Naive thymus-derived CD4-positive, alpha-beta T cell (primary cell): ENCODE measurements at regions of chr19 and their contacts with region 1.

Region 1: DNA sequence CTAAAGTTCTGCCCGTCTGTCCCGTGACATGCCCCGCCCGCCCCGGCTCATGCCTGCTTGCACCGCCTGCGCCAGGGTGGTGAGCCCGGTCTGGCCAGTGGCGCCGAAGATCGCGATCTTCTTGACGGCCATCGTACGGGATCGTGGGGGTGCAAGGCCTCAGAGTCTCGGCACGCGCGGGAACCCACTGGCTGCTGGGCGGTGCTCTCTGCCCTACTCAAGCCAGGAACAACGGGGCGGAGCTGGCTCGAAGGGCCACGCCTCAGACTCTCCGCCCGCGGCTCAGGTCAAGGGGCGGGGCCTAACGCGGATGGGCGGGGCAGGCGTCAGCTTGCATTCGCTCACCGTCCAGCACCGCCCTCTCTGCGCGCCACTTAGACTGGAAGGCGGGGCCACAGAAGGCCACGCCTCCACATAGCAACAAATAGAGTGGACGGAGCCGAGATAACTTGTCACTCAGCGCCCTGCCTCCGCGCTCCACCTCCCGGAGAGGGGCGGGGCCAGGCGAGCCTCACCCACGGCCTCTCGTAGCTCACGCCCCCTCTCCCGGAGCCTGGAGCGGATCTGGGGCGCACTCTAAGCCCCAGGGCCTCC is at the start of gene BLVRB:
- DNase-seq: peak; percentile 98 to 100 (median 99)
- ATAC-seq: peak; percentile 90
- H3K4me3 ChIP-seq: peak within 1 kb of the TSS; percentile 44
- H3K4me3 Mint-ChIP-seq: peak within 1 kb of the TSS; percentile 83 to 95 (median 86)
- H3K27ac ChIP-seq: peak within 1 kb of the TSS; percentile 66
- H3K27ac Mint-ChIP-seq: peak within 1 kb of the TSS; percentile 70 to 94 (median 87)
- H3K4me1 ChIP-seq: peaks cover 0 to 7% of the 10 kb centered on the region in 2 donors
- H3K4me1 Mint-ChIP-seq: peaks cover 18 to 27% (median 25%) of the 10 kb centered on the region in 7 donors
- H3K27me3 ChIP-seq: peaks cover 3 to 4% of the 10 kb centered on the region in 2 donors
- H3K27me3 Mint-ChIP-seq: peaks cover 6 to 28% (median 7%) of the 10 kb centered on the region in 5 donors
- total RNA-seq, gene BLVRB: 11.0 to 42.2 (median 13.3) TPM

Region 2: GRCh38 chr19:40305403-40305802 is 160.3 kb before region 1 on chr19:
- CTCF ChIA-PET with region 1: interaction called, 3 read pairs
- POLR2A ChIA-PET with region 1: no interaction called
- intact Hi-C with region 1: loop called in 1 of 2 experiments (anchors 1 kb)
- DNase-seq: peak; percentile 39 to 75 (median 63)
- ATAC-seq: peak; percentile 80
- H3K4me3 ChIP-seq: no peak overlapping the region
- H3K4me3 Mint-ChIP-seq: no peak overlapping the region
- H3K27ac ChIP-seq: no peak overlapping the region
- H3K27ac Mint-ChIP-seq: no peak overlapping the region
- H3K4me1 ChIP-seq: no peaks in the 10 kb centered on the region
- H3K4me1 Mint-ChIP-seq: peaks cover 0 to 5% (median 4%) of the 10 kb centered on the region in 7 donors
- H3K27me3 ChIP-seq: no peaks in the 10 kb centered on the region
- H3K27me3 Mint-ChIP-seq: no peaks in the 10 kb centered on the region

Region 3: GRCh38 chr19:40403262-40403984 is 62.2 kb before region 1 on chr19:
- CTCF ChIA-PET with region 1: no interaction called
- POLR2A ChIA-PET with region 1: interaction called, 4 read pairs
- intact Hi-C with region 1: loop called (anchors 1 kb)
- DNase-seq: peak; percentile 54 to 84 (median 69)
- ATAC-seq: peak; percentile 80
- H3K4me3 ChIP-seq: peak overlapping the region; percentile 74
- H3K4me3 Mint-ChIP-seq: peak overlapping the region; percentile 78 to 98 (median 93)
- H3K27ac ChIP-seq: peak overlapping the region; percentile 79
- H3K27ac Mint-ChIP-seq: peak overlapping the region; percentile 75 to 93 (median 86)
- H3K4me1 ChIP-seq: peaks cover 5 to 12% of the 10 kb centered on the region in 2 donors
- H3K4me1 Mint-ChIP-seq: peaks cover 22 to 42% (median 36%) of the 10 kb centered on the region in 7 donors
- H3K27me3 ChIP-seq: no peaks in the 10 kb centered on the region
- H3K27me3 Mint-ChIP-seq: peaks cover 0 to 6% (median 0%) of the 10 kb centered on the region in 5 donors

Region 4: GRCh38 chr19:40523322-40524047 is 57.8 kb after region 1 on chr19:
- CTCF ChIA-PET with region 1: interaction called, 4 read pairs
- POLR2A ChIA-PET with region 1: no interaction called
- intact Hi-C with region 1: loop called in 1 of 2 experiments (anchors 2 kb)
- DNase-seq: peak in 4 of 9 donors; percentile 19 to 56 (median 26)
- ATAC-seq: peak; percentile 87
- H3K4me3 ChIP-seq: no peak overlapping the region
- H3K4me3 Mint-ChIP-seq: no peak overlapping the region
- H3K27ac ChIP-seq: no peak overlapping the region
- H3K27ac Mint-ChIP-seq: no peak overlapping the region
- H3K4me1 ChIP-seq: no peaks in the 10 kb centered on the region
- H3K4me1 Mint-ChIP-seq: peaks cover 0 to 12% (median 5%) of the 10 kb centered on the region in 7 donors
- H3K27me3 ChIP-seq: no peaks in the 10 kb centered on the region
- H3K27me3 Mint-ChIP-seq: peaks cover 11 to 23% (median 19%) of the 10 kb centered on the region in 5 donors

Region 5: GRCh38 chr19:40570313-40571004 is 104.8 kb after region 1 on chr19:
- CTCF ChIA-PET with region 1: interaction called, 3 read pairs
- POLR2A ChIA-PET with region 1: interaction called, 4 read pairs
- intact Hi-C with region 1: loop called (anchors 1 kb)
- DNase-seq: peak; percentile 90 to 97 (median 96)
- ATAC-seq: peak; percentile 94
- H3K4me3 ChIP-seq: peak overlapping the region; percentile 45
- H3K4me3 Mint-ChIP-seq: peak overlapping the region; percentile 50 to 85 (median 82)
- H3K27ac ChIP-seq: no peak overlapping the region
- H3K27ac Mint-ChIP-seq: peak overlapping the region; percentile 55 to 93 (median 81)
- H3K4me1 ChIP-seq: peaks cover 9 to 13% of the 10 kb centered on the region in 2 donors
- H3K4me1 Mint-ChIP-seq: peaks cover 10 to 27% (median 19%) of the 10 kb centered on the region in 7 donors
- H3K27me3 ChIP-seq: no peaks in the 10 kb centered on the region
- H3K27me3 Mint-ChIP-seq: peaks cover 9 to 41% (median 17%) of the 10 kb centered on the region in 5 donors

Region 6: GRCh38 chr19:40603389-40604135 is 137.9 kb after region 1 on chr19:
- CTCF ChIA-PET with region 1: interaction called, 5 read pairs
- POLR2A ChIA-PET with region 1: interaction called, 3 read pairs
- intact Hi-C with region 1: loop called in 1 of 2 experiments (anchors 1 kb)
- DNase-seq: peak; percentile 82 to 96 (median 93)
- ATAC-seq: peak; percentile 86
- H3K4me3 ChIP-seq: peak overlapping the region; percentile 72
- H3K4me3 Mint-ChIP-seq: peak overlapping the region; percentile 84 to 98 (median 88)
- H3K27ac ChIP-seq: peak overlapping the region; percentile 35
- H3K27ac Mint-ChIP-seq: peak overlapping the region; percentile 72 to 93 (median 86)
- H3K4me1 ChIP-seq: peaks cover 54 to 61% of the 10 kb centered on the region in 2 donors
- H3K4me1 Mint-ChIP-seq: peaks cover 20 to 84% (median 71%) of the 10 kb centered on the region in 7 donors
- H3K27me3 ChIP-seq: peaks cover 10 to 21% of the 10 kb centered on the region in 2 donors
- H3K27me3 Mint-ChIP-seq: peaks cover 24 to 39% (median 30%) of the 10 kb centered on the region in 5 donors

Region 7: GRCh38 chr19:40777937-40778705 is 312.5 kb after region 1 on chr19 and contains the start of gene RAB4B:
- CTCF ChIA-PET with region 1: no interaction called
- POLR2A ChIA-PET with region 1: no interaction called
- intact Hi-C with region 1: loop called (anchors 1 to 2 kb)
- DNase-seq: peak; percentile 99 to 100 (median 100)
- ATAC-seq: peak; percentile 92
- H3K4me3 ChIP-seq: peak within 1 kb of the TSS; percentile 97
- H3K4me3 Mint-ChIP-seq: peak within 1 kb of the TSS; percentile 91 to 99 (median 96)
- H3K27ac ChIP-seq: peak within 1 kb of the TSS; percentile 92
- H3K27ac Mint-ChIP-seq: peak within 1 kb of the TSS; percentile 87 to 99 (median 98)
- H3K4me1 ChIP-seq: peaks cover 18 to 24% of the 10 kb centered on the region in 2 donors
- H3K4me1 Mint-ChIP-seq: peaks cover 31 to 49% (median 39%) of the 10 kb centered on the region in 7 donors
- H3K27me3 ChIP-seq: no peaks in the 10 kb centered on the region
- H3K27me3 Mint-ChIP-seq: no peaks in the 10 kb centered on the region
- total RNA-seq, gene RAB4B: 37.6 to 63.0 (median 52.5) TPM